Naive thymus-derived CD4-positive, alpha-beta T cell (primary cell): ENCODE measurements at regions of chr19 and their contacts with region 1.

Region 1: DNA sequence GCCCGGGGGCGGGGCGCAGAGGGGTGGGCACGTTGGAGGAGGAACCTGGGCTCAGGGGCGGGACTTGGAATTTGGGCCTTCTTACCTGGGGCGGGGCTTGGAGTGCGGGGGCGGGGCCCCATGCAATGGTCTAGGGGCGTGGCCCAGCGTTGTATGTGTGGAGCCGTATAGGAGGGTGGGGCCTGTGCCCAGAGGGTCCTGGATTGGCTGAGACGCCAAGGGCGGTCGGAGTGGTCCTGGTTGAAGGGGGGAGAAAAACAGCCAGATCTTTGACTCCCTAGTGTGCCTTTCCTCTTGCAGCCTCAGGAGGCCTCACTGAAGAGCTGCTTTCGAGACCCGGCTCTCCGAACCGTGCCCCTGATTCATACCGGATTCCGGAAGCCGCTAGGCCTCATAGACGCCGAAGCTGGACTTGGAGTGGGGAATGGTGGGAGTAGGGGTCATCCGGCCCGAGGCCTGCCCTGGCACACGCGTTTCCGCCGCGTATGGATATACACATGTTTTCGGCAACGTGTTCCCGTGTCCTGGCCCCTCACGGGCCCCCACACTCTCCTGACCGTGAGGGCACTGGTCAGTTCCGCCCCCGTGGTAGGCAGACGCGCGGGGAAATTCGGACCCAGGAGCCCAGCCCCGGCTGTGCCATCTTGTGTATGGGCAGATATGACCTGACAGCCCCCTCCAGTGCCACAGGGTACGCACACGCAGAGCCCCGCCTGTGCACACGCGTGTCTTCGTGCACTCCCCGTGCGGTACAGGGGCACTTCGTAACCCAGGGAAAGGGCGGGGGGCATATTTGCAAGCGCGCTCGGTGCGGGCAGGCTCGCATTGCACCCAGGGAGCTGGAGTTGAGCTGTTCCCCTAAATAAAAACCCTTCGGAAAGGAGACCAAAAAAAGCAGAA is 661 bp upstream of the PRR12 start:
- DNase-seq: peak; percentile 85 to 98 (median 97)
- ATAC-seq: peak; percentile 90
- H3K4me3 ChIP-seq: peak overlapping the region; percentile 97
- H3K4me3 Mint-ChIP-seq: peak overlapping the region; percentile 85 to 95 (median 94)
- H3K27ac ChIP-seq: peak overlapping the region; percentile 86
- H3K27ac Mint-ChIP-seq: peak overlapping the region; percentile 76 to 95 (median 93)
- H3K4me1 ChIP-seq: peaks cover 15 to 18% of the 10 kb centered on the region in 2 donors
- H3K4me1 Mint-ChIP-seq: peaks cover 26 to 42% (median 31%) of the 10 kb centered on the region in 7 donors
- H3K27me3 ChIP-seq: no peaks in the 10 kb centered on the region
- H3K27me3 Mint-ChIP-seq: peaks cover 0 to 12% (median 0%) of the 10 kb centered on the region in 5 donors

Region 2: DNA sequence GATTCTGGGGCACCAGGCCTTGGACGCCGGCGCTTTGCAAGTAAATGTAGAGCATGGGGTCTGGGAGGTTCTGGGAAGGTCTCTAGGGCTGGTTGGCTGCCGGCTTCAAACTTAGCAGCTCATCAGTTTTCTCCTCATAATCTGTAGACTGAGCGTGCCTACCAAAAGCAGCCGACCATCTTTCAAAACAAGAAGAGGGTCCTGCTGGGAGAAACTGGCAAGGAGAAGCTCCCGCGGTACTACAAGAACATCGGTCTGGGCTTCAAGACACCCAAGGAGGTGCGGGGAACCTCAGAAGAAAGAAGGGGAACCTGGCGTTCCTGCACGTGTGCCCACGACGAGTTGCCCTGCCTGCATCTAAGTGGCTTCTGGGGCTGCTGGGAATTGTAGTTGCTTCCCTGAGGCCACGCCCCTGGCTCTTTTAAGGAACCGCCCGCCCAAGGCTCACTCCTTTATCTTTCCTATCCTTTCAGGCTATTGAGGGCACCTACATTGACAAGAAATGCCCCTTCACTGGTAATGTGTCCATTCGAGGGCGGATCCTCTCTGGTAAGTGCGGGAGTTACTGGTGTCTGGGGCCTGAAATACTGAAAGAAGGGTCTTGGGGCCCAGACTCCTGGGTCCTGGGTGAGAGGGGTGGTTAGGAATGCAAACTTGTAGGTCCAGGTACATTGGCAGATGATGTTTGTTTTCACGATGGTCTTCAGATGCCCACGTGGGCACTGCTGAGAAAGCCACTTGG is 93.1 kb before region 1 on chr19:
- CTCF ChIA-PET with region 1: no interaction called
- POLR2A ChIA-PET with region 1: interaction called, 29 read pairs
- intact Hi-C with region 1: loop called in 1 of 2 experiments (anchors 1 kb)
- DNase-seq: peak; percentile 55 to 85 (median 77)
- ATAC-seq: peak; percentile 20
- H3K4me3 ChIP-seq: peak overlapping the region; percentile 97
- H3K4me3 Mint-ChIP-seq: peak overlapping the region; percentile 96 to 100 (median 99)
- H3K27ac ChIP-seq: peak overlapping the region; percentile 99
- H3K27ac Mint-ChIP-seq: peak overlapping the region; percentile 91 to 100 (median 98)
- H3K4me1 ChIP-seq: peaks cover 21 to 40% of the 10 kb centered on the region in 2 donors
- H3K4me1 Mint-ChIP-seq: peaks cover 32 to 64% (median 50%) of the 10 kb centered on the region in 7 donors
- H3K27me3 ChIP-seq: no peaks in the 10 kb centered on the region
- H3K27me3 Mint-ChIP-seq: peaks cover 0 to 12% (median 0%) of the 10 kb centered on the region in 5 donors

Region 3: DNA sequence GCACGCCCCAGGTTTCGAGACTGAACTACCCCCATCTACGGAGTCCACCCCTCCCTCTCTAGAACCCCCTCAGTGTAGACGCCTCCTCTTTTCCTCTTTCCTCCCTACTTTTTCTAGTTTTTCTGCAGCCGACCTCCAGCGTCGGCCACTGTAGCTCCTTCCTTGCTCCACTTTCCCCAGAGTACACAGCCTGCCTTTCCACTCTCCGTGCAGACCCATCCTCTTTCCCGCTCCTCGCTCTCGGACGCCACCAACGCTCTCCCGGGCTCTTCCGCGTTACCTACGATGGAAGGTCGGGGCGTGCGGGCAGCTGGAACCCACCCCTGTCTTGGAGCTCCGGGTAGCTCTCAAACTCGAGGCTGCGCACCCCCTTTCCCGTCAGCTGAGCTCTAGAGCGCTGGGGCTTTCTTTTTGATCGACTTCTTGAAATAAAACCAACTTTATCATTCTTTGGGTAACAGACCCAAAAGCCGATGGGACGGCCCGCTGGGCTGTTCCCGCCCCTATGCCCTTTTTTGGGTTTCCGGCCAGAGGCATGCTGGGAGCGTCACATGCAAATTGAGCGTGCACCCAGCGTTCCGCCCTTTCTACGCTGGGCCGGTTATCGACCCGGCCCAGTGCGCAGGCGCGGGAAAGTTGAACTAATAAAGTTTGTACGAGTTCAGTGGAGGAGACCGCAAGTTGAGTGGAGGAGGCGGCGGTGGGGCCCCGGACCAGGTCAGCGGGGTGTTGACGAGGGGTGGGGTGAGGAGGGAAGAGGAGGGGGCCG is 75.2 kb after region 1 on chr19 and contains the starts of genes BCL2L12 and IRF3:
- CTCF ChIA-PET with region 1: interaction called, 4 read pairs
- POLR2A ChIA-PET with region 1: interaction called, 18 read pairs
- intact Hi-C with region 1: loop called (anchors 1 to 2 kb)
- DNase-seq: peak; percentile 99
- ATAC-seq: peak; percentile 90
- H3K4me3 ChIP-seq: peak within 1 kb of the TSS; percentile 95
- H3K4me3 Mint-ChIP-seq: peak within 1 kb of the TSS; percentile 97 to 100 (median 99)
- H3K27ac ChIP-seq: peak within 1 kb of the TSS; percentile 80
- H3K27ac Mint-ChIP-seq: peak within 1 kb of the TSS; percentile 96 to 99 (median 97)
- H3K4me1 ChIP-seq: peaks cover 23% of the 10 kb centered on the region in 2 donors
- H3K4me1 Mint-ChIP-seq: peaks cover 24 to 47% (median 39%) of the 10 kb centered on the region in 7 donors
- H3K27me3 ChIP-seq: no peaks in the 10 kb centered on the region
- H3K27me3 Mint-ChIP-seq: peaks cover 0 to 2% (median 0%) of the 10 kb centered on the region in 5 donors
- total RNA-seq, gene BCL2L12: 11.3 to 57.2 (median 22.6) TPM
- total RNA-seq, gene IRF3: 176 to 346 (median 212) TPM

Region 4: DNA sequence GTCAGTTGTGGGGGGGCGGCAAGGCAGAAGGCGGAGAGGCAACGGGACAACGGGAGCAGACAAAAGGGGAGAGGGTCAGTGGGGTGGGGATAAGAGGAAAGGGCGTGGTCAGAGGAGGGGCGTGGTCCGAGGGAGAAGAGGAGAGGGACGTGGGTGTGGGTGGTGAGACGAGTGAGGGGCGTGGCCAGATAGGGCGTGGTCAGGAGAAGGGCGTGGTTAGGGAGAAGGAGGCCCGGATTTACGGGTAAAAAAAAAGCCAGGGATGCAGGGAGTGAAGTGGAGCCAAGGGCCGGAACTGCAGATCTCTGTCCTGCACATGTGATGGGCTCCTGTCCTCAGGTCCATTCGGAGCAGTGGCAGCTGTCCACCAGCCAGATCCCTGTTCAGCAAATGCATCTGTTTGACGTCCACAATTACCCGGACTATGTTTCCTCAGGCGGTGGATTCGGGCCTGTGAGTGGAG is 122.1 kb after region 1 on chr19:
- CTCF ChIA-PET with region 1: no interaction called
- POLR2A ChIA-PET with region 1: no interaction called
- intact Hi-C with region 1: loop called in 1 of 2 experiments (anchors 1 kb)
- DNase-seq: no peak
- ATAC-seq: no peak
- H3K4me3 ChIP-seq: no peak overlapping the region
- H3K4me3 Mint-ChIP-seq: no peak overlapping the region
- H3K27ac ChIP-seq: no peak overlapping the region
- H3K27ac Mint-ChIP-seq: peak overlapping the region in 1 of 9 donors; percentile 83
- H3K4me1 ChIP-seq: peaks cover 0 to 2% of the 10 kb centered on the region in 2 donors
- H3K4me1 Mint-ChIP-seq: peaks cover 3 to 12% (median 4%) of the 10 kb centered on the region in 7 donors
- H3K27me3 ChIP-seq: no peaks in the 10 kb centered on the region
- H3K27me3 Mint-ChIP-seq: peaks cover 0 to 4% (median 0%) of the 10 kb centered on the region in 5 donors